Caco-2 (cell line): ENCODE measurements at regions of chr2 and their contacts with region 1.

Region 1: GRCh38 chr2:32168513-32168912 is 2.8 kb downstream of the SLC30A6 start:
- DNase-seq: no peak
- H3K4me3 ChIP-seq: no peak overlapping the region
- H3K4me3 Mint-ChIP-seq: no peak overlapping the region
- H3K27ac Mint-ChIP-seq: no peak overlapping the region
- H3K4me1 ChIP-seq: peaks cover 10% of the 10 kb centered on the region; the same call in 1 of the 2 replicates
- H3K4me1 Mint-ChIP-seq: peaks cover 19% of the 10 kb centered on the region
- H3K27me3 ChIP-seq: no peaks in the 10 kb centered on the region
- H3K27me3 Mint-ChIP-seq: no peaks in the 10 kb centered on the region
- CTCF ChIP-seq: no peak

Region 2: GRCh38 chr2:31547485-31547884 is 621.0 kb before region 1 on chr2:
- CTCF ChIA-PET with region 1: no interaction called
- POLR2A ChIA-PET with region 1: no interaction called
- intact Hi-C with region 1: no loop called
- DNase-seq: no peak
- H3K4me3 ChIP-seq: no peak overlapping the region
- H3K4me3 Mint-ChIP-seq: no peak overlapping the region
- H3K27ac Mint-ChIP-seq: no peak overlapping the region
- H3K4me1 ChIP-seq: no peaks in the 10 kb centered on the region
- H3K4me1 Mint-ChIP-seq: no peaks in the 10 kb centered on the region
- H3K27me3 ChIP-seq: no peaks in the 10 kb centered on the region
- H3K27me3 Mint-ChIP-seq: peaks cover 8% of the 10 kb centered on the region
- CTCF ChIP-seq: no peak

Region 3: GRCh38 chr2:32124660-32125059 is 43.9 kb before region 1 on chr2:
- CTCF ChIA-PET with region 1: no interaction called
- POLR2A ChIA-PET with region 1: no interaction called
- intact Hi-C with region 1: no loop called
- DNase-seq: no peak
- H3K4me3 ChIP-seq: no peak overlapping the region
- H3K4me3 Mint-ChIP-seq: no peak overlapping the region
- H3K27ac Mint-ChIP-seq: no peak overlapping the region
- H3K4me1 ChIP-seq: peaks cover 7% of the 10 kb centered on the region; the same call in 1 of the 2 replicates
- H3K4me1 Mint-ChIP-seq: no peaks in the 10 kb centered on the region
- H3K27me3 ChIP-seq: no peaks in the 10 kb centered on the region
- H3K27me3 Mint-ChIP-seq: no peaks in the 10 kb centered on the region
- CTCF ChIP-seq: no peak

Region 4: GRCh38 chr2:32135409-32135808 is 33.1 kb before region 1 on chr2:
- CTCF ChIA-PET with region 1: no interaction called
- POLR2A ChIA-PET with region 1: interaction called, 5 read pairs
- intact Hi-C with region 1: loop called (anchors 1 kb)
- DNase-seq: peak; percentile 81 to 88
- H3K4me3 ChIP-seq: no peak overlapping the region
- H3K4me3 Mint-ChIP-seq: peak overlapping the region; percentile 60
- H3K27ac Mint-ChIP-seq: peak overlapping the region; percentile 97
- H3K4me1 ChIP-seq: peaks cover 16% of the 10 kb centered on the region
- H3K4me1 Mint-ChIP-seq: peaks cover 13% of the 10 kb centered on the region
- H3K27me3 ChIP-seq: no peaks in the 10 kb centered on the region
- H3K27me3 Mint-ChIP-seq: no peaks in the 10 kb centered on the region
- CTCF ChIP-seq: peak; percentile 20 to 45